ENCODE measurements at regions of chr10 and their contacts with region 1.

Region 1: DNA sequence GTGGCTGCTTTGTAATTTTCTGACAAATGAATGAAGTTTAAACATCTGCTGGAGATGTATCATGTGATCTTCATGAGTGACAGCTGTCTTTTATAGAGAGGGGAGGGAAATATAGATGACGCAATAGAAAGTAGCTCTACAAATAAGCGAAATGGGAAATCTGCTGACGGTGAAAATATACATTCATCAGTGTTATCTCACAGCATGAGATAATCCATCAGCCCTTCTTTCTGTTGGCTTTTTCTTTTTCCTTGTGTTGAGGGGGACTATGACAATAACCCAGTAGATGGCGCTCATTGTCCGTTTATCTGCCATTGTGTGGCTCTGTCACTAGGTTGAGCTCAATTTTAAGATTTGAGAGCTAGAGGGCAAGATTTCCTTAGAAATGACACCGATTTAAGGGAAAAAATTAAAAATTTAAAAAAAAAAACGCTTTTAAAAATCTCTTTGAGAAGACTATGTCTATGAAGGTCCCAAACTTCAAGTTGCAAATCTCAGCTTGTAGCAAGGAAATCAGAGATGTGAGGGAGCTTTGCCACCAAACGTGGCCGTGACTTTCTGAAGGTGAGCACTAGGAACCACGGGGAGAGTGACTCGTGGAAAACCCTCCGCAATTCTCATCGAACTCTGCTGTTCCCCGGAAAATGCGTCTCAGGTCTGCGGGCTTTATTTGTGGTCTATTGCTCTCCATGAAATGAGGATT is 114.6 kb upstream of the SFMBT2 start:
- DNase-seq: peak; percentile 47
- H3K4me3 Mint-ChIP-seq: no peak overlapping the region
- H3K27ac Mint-ChIP-seq: no peak overlapping the region
- H3K4me1 Mint-ChIP-seq: peaks cover 18% of the 10 kb centered on the region
- H3K27me3 Mint-ChIP-seq: peaks cover 12% of the 10 kb centered on the region

Region 2: GRCh38 chr10:7285522-7286322 is 239.7 kb before region 1 on chr10:
- intact Hi-C with region 1: no loop called
- DNase-seq: no peak
- H3K4me3 Mint-ChIP-seq: no peak overlapping the region
- H3K27ac Mint-ChIP-seq: no peak overlapping the region
- H3K4me1 Mint-ChIP-seq: peaks cover 5% of the 10 kb centered on the region
- H3K27me3 Mint-ChIP-seq: no peaks in the 10 kb centered on the region

Region 3: GRCh38 chr10:7445474-7446185 is 79.8 kb before region 1 on chr10:
- intact Hi-C with region 1: no loop called
- DNase-seq: no peak
- H3K4me3 Mint-ChIP-seq: no peak overlapping the region
- H3K27ac Mint-ChIP-seq: no peak overlapping the region
- H3K4me1 Mint-ChIP-seq: no peaks in the 10 kb centered on the region
- H3K27me3 Mint-ChIP-seq: peaks cover 25% of the 10 kb centered on the region

Region 4: DNA sequence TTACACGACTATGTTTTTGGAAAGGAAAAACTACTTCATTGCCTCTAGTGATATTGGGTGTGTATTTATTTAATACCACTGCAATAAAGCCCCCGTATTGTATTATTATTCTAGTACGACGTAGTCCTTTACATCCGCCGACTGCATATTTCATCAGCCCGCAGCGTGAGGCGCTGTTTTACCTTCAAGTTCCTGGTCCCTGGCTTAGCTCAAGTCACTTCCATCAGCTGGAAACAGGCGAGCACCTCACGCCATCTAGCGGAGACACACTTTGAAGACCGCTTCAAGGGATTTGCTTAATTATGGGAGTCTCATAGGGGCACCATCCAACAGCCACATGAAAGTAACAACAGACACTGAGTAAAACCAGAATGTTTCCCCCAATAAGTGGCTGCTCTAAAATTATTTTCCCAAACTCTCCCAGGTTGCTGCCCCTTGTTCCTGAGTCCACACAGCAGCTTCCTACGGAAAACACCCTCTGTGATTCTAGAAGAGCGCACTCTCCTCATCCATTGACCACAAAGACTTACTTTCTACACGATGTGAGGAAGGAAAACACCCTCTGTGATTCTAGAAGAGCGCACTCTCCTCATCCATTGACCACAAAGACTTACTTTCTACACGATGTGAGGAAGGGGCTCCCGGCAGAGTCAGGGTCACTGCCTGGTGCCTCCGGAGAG is 161.9 kb after region 1 on chr10:
- intact Hi-C with region 1: loop called (anchors 1 kb)
- DNase-seq: peak; percentile 72
- H3K4me3 Mint-ChIP-seq: no peak overlapping the region
- H3K27ac Mint-ChIP-seq: no peak overlapping the region
- H3K4me1 Mint-ChIP-seq: peaks cover 10% of the 10 kb centered on the region
- H3K27me3 Mint-ChIP-seq: peaks cover 29% of the 10 kb centered on the region

Region 5: DNA sequence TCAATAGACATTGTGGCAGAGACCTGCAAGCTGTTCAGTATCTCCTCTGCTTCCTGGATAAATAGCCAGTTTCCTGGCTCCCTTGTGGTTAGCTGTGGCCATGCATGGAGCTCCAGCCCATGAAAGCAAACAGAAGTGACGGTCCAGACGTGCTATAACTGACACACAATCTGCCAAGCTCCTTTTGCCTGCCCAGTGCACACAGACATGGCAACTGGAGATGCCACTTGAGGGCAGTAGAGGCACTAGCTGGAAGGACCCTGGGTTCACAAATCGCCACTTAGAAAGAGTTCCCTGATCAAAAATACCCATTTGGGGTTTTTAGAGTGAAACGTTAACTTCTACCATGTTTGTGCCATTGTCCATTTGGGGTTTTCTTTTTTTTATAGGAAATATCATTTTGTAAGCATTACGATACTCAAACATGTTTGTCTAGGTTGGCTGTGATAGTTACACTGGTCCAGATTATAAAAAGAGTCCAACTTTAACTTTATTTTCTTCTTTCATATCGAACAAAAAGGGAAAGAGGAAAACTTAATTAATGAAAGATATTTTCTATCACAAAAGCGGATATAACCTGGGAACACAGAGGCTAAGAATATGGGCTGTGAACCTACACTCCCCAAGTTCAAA is 231.0 kb after region 1 on chr10:
- intact Hi-C with region 1: loop called (anchors 5 kb)
- DNase-seq: no peak
- H3K4me3 Mint-ChIP-seq: no peak overlapping the region
- H3K27ac Mint-ChIP-seq: no peak overlapping the region
- H3K4me1 Mint-ChIP-seq: no peaks in the 10 kb centered on the region
- H3K27me3 Mint-ChIP-seq: no peaks in the 10 kb centered on the region

Measured in activated T-helper 2 cell treated with anti-CD3 and anti-CD28 coated beads, Interferon-gamma antibody, Interleukin-2, Interleukin-4, amounts not matched to agents 10 μg/mL and 5 μg/mL and 100 μg/mL, durations not matched to agents 14 hours and 24 hours and 36 hours (primary cell).